Thyroid gland (tissue), 4 donors: ENCODE measurements at regions of chr5 and their contacts with region 1.

Region 1: DNA sequence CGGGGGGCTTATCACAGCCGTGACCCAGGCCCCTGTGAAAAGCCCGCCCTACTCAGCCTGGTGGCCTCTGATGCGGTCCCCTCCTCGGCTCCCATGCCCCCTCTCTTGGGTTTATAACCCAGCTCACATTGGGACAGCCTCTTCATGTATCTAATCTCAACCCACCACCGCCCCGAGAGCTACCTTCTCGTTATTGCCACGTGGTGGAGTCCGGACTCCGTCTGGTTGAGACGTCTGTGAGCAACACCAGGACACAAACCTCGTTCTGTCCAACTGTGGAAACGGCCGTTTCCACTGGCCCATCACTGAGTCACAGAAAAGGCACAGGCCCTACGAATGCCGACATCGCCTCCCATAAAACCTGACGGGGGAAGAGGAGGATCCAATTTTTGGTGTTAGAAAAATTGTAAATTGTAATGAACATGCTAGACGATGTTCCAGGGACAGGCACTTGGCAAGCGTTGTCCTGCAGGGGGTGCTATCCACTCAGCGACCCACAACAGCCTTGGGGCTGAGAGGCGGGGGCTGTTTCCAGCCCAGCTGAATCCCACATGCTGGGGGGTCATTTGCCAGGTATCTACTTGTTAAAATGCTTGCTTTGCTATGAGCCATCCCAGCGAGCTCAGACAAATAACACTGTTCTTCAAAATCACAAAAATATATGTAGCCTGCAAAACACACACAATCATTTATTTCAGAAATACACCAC is 37.3 kb upstream of the N4BP3 start:
- DNase-seq: peak; percentile 68 to 73
- H3K4me3 ChIP-seq: no peak overlapping the region
- H3K27ac ChIP-seq: no peak overlapping the region
- H3K4me1 ChIP-seq: no peaks in the 10 kb centered on the region
- H3K27me3 ChIP-seq: no peaks in the 10 kb centered on the region
- CTCF ChIP-seq: peak; percentile 35 to 94 (median 85)
- POLR2A ChIP-seq: no peak

Region 2: GRCh38 chr5:178146020-178146820 is 70.2 kb after region 1 on chr5:
- intact Hi-C with region 1: loop called (anchors 5 kb)
- DNase-seq: peak; percentile 76 to 80
- H3K4me3 ChIP-seq: no peak overlapping the region
- H3K27ac ChIP-seq: no peak overlapping the region
- H3K4me1 ChIP-seq: no peaks in the 10 kb centered on the region
- H3K27me3 ChIP-seq: no peaks in the 10 kb centered on the region
- CTCF ChIP-seq: peak; percentile 36 to 75 (median 60)
- POLR2A ChIP-seq: no peak

Region 3: DNA sequence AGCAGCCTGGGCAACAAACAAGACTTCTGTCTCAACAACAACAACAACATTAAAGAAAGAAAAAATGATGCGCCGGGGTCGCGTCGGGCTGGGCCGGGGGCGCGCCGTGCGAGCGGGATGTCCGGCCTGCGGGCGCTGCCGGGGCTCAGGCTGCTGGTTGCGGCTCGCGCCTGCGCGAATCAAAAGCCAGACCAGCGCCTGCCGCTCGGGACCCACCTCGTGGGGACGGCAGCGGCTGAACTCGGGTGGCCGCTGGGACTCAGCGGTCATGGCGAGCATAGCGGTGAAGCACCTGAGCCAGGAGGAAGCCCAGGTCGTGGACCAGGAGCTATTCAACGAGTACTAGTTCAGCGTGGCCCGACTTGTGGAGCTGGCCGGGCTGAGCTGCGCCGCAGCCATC is 89.6 kb after region 1 on chr5:
- intact Hi-C with region 1: loop called (anchors 5 kb)
- DNase-seq: no peak
- H3K4me3 ChIP-seq: no peak overlapping the region
- H3K27ac ChIP-seq: no peak overlapping the region
- H3K4me1 ChIP-seq: peaks cover 0 to 8% of the 10 kb centered on the region in 2 donors
- H3K27me3 ChIP-seq: no peaks in the 10 kb centered on the region
- CTCF ChIP-seq: no peak
- POLR2A ChIP-seq: no peak

Region 4: GRCh38 chr5:178677429-178677828 is 601.4 kb after region 1 on chr5:
- intact Hi-C with region 1: no loop called
- DNase-seq: no peak
- H3K4me3 ChIP-seq: no peak overlapping the region
- H3K27ac ChIP-seq: no peak overlapping the region
- H3K4me1 ChIP-seq: no peaks in the 10 kb centered on the region
- H3K27me3 ChIP-seq: no peaks in the 10 kb centered on the region
- CTCF ChIP-seq: no peak
- POLR2A ChIP-seq: no peak